Sigmoid colon (tissue), 7 donors: ENCODE measurements at regions of chr12 and their contacts with region 1.

Region 1: DNA sequence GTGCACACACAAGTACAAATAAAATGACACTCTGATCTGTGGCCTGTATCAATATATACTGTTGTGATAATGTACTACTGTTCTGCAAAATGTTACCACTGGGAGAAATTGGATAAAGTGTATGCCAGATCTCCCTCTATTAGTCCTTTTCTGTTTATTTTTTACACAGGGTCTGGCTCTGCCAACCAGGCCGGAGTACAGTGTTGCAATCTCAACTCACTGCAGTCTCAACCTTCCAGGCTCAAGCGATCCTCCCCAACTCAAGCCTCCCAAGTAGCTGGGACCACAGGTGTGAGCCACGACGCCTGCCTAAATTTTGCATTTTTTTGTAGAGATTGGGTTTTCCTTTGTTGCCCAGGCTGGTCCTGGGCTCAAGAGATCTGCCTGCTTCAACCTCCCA is 1.9 kb downstream of the NT5DC3 start:
- DNase-seq: no peak
- H3K4me3 ChIP-seq: peak overlapping the region; percentile 78 to 97 (median 96)
- H3K27ac ChIP-seq: peak overlapping the region; percentile 91 to 99 (median 94)
- H3K4me1 ChIP-seq: peaks cover 0 to 65% (median 31%) of the 10 kb centered on the region in 4 donors
- H3K27me3 ChIP-seq: no peaks in the 10 kb centered on the region
- CTCF ChIP-seq: no peak
- EP300 ChIP-seq: no peak
- POLR2A ChIP-seq: no peak

Region 2: DNA sequence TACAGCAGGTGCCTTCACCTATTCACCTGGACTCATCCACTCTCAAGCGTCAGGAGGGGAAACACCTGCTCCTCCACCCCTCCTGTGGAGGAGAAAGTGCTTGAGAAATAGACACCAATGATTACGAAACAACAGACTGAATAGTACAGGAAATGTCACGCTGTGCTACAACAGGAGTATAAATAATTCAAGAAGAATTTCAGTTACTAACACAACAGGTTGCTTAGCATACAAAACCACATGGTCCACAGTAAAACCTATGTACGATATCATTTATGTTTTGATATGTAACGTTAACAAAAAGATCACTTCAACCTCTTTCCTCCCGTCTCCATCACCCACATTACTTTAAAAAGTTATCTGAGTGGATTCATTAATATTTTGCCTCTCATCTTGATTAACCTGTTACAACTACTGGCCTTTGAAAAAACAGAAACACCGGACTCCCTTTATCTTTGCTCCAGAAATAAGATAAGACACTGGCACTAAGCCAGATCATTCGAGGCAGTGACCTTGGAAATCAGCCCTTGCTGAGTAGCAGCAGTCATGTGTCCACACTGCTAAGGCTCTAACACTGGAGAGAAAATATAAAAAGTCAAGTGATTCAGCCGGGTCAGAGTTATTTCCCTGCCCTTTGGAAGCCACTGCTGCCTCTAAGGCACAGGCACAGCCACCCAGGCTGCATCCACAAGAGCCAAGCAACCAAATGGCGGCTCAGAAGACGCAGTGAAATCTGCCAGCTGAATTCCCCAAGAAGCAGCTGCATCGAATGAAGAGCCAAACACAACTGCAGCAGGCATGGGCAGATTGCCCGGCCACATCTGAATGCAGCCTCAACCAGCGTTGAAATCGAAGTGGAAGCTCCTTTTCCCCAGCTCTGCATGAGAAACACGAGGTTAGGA is 39.0 kb before region 1 on chr12:
- intact Hi-C with region 1: loop called (anchors 5 kb)
- DNase-seq: peak; percentile 83
- H3K4me3 ChIP-seq: no peak overlapping the region
- H3K27ac ChIP-seq: peak overlapping the region; percentile 72 to 99 (median 78)
- H3K4me1 ChIP-seq: peaks cover 0 to 96% (median 86%) of the 10 kb centered on the region in 4 donors
- H3K27me3 ChIP-seq: no peaks in the 10 kb centered on the region
- CTCF ChIP-seq: no peak
- EP300 ChIP-seq: peak in 2 of 4 donors; percentile 33
- POLR2A ChIP-seq: no peak

Region 3: DNA sequence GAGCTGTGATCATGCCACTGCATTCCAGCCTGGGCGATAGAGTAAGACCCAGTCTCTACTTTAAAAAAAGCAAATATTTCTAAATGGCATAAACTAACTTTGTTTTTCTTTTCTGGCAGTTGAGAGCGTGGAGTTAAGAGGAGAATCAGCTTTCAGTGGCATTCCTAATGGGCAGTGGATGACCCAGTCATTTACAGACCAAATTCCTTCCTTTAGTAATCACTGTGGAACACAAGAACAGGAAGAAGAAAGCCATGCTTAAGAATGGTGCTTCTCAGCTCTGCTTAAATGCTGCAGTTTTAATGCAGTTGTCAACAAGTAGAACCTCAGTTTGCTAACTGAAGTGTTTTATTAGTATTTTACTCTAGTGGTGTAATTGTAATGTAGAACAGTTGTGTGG is 147.7 kb after region 1 on chr12:
- intact Hi-C with region 1: no loop called
- DNase-seq: no peak
- H3K4me3 ChIP-seq: no peak overlapping the region
- H3K27ac ChIP-seq: peak overlapping the region in 1 of 4 donors; percentile 0
- H3K4me1 ChIP-seq: no peaks in the 10 kb centered on the region
- H3K27me3 ChIP-seq: no peaks in the 10 kb centered on the region
- CTCF ChIP-seq: no peak
- EP300 ChIP-seq: no peak
- POLR2A ChIP-seq: no peak

Region 4: GRCh38 chr12:104667139-104667538 is 828.0 kb after region 1 on chr12:
- intact Hi-C with region 1: no loop called
- DNase-seq: peak; percentile 79
- H3K4me3 ChIP-seq: no peak overlapping the region
- H3K27ac ChIP-seq: peak overlapping the region in 3 of 4 donors; percentile 78 to 85 (median 82)
- H3K4me1 ChIP-seq: peaks cover 0 to 83% (median 68%) of the 10 kb centered on the region in 4 donors
- H3K27me3 ChIP-seq: no peaks in the 10 kb centered on the region
- CTCF ChIP-seq: no peak
- EP300 ChIP-seq: no peak
- POLR2A ChIP-seq: no peak